Mammary epithelial cell (primary cell): ENCODE measurements at regions of chr19 and their contacts with region 1.

Region 1: DNA sequence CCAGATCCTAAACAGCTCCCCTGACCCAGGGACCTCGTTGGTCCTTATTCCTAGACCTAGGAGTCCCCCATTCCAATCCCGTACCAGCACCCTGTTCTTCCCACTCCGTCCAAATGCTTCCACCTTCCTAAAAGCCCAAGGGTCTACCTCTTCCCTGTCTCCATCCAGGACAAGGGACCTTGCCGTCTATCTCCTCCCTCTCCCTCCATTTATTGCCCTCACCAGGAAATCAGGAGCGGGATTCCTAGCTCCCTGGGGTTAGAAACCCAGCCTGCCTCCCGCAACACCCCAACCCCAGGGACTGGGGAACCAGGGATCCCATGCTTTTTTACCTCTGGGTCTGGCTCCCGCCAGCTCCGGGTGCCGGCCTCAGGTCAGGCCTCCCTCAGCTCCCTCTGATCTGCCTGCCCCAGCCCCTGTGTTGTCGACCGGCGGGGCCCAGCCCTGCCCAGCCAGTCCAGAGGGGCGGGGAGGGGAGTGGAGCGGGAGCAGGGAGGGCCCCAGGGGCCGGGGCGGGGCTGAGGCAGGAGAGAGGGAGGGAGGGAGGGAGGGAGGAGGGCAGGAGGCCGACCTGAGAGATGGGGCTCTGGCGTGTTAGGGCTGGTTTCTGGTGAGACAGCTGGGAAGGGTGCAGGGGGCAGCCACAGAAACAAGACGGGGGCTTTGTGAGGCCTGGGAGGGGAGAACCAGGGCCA is at the start of gene B3GNT8:
- DNase-seq: peak; percentile 84
- H3K4me3 ChIP-seq: peak within 1 kb of the TSS; percentile 52 to 67 (median 53)
- H3K27ac ChIP-seq: peak within 1 kb of the TSS; percentile 51
- H3K4me1 ChIP-seq: peaks cover 26% of the 10 kb centered on the region
- H3K27me3 ChIP-seq: no peaks in the 10 kb centered on the region
- CTCF ChIP-seq: no peak
- total RNA-seq, gene B3GNT8: 5.2 to 5.8 TPM

Region 2: GRCh38 chr19:41273076-41273475 is 154.0 kb before region 1 on chr19:
- CTCF ChIA-PET with region 1: no interaction called
- dilution Hi-C with region 1: loop called (anchors 5 kb)
- in situ Hi-C with region 1: no loop called
- intact Hi-C with region 1: no loop called
- DNase-seq: no peak
- H3K4me3 ChIP-seq: no peak overlapping the region
- H3K27ac ChIP-seq: no peak overlapping the region
- H3K4me1 ChIP-seq: no peaks in the 10 kb centered on the region
- H3K27me3 ChIP-seq: no peaks in the 10 kb centered on the region
- CTCF ChIP-seq: no peak

Region 3: GRCh38 chr19:41310033-41310758 is 116.9 kb before region 1 on chr19 and contains the start of gene CCDC97:
- CTCF ChIA-PET with region 1: no interaction called
- dilution Hi-C with region 1: no loop called
- in situ Hi-C with region 1: no loop called
- intact Hi-C with region 1: loop called (anchors 1 kb)
- DNase-seq: peak; percentile 83
- H3K4me3 ChIP-seq: peak within 1 kb of the TSS; percentile 75 to 89 (median 88)
- H3K27ac ChIP-seq: peak within 1 kb of the TSS; percentile 80
- H3K4me1 ChIP-seq: peaks cover 15% of the 10 kb centered on the region
- H3K27me3 ChIP-seq: no peaks in the 10 kb centered on the region
- CTCF ChIP-seq: peak in 1 of 2 donors; percentile 3
- total RNA-seq, gene CCDC97: 10.8 to 24.8 TPM

Region 4: DNA sequence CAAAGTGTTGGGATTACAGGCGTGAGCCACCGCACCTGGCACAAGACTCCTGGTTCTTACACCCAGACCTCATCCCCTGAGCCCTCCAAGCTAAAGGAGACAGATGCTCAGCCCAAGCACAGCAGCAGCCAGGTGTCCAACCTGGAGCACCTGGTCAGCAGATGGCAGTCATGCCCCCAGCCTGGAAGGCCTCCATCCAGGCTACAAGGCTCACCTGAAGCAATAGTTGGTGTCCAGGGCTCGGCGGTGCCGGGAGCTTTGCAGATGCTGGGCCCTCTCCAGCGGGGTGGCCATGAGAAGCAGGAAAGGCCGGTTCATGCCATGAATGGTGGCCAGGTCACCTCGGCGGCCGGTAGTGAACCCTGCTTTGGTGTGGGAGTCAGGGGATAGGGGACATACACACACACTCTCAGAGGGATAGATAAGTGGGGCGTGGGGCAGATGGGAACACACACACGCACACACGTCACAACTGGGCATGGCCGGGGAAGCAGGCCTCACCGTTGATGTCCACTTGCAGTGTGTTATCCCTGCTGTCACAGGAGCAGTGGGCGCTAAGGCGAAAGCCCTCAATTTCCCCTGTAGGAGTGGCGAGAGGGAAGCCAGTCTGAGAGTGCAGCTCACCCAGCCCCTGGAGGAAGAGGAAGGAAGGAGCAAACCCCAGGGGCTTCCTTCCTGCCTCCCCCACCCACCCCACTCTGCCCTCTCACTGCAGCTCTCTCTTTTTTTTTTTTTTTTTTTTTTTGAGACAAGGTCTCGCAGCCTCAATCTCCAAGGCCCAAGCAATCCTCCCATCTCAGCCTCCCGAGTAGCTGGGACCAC is 85.2 kb before region 1 on chr19:
- CTCF ChIA-PET with region 1: no interaction called
- dilution Hi-C with region 1: no loop called
- in situ Hi-C with region 1: no loop called
- intact Hi-C with region 1: loop called (anchors 1 kb)
- DNase-seq: no peak
- H3K4me3 ChIP-seq: no peak overlapping the region
- H3K27ac ChIP-seq: no peak overlapping the region
- H3K4me1 ChIP-seq: no peaks in the 10 kb centered on the region
- H3K27me3 ChIP-seq: no peaks in the 10 kb centered on the region
- CTCF ChIP-seq: peak in 1 of 2 donors; percentile 38

Region 5: DNA sequence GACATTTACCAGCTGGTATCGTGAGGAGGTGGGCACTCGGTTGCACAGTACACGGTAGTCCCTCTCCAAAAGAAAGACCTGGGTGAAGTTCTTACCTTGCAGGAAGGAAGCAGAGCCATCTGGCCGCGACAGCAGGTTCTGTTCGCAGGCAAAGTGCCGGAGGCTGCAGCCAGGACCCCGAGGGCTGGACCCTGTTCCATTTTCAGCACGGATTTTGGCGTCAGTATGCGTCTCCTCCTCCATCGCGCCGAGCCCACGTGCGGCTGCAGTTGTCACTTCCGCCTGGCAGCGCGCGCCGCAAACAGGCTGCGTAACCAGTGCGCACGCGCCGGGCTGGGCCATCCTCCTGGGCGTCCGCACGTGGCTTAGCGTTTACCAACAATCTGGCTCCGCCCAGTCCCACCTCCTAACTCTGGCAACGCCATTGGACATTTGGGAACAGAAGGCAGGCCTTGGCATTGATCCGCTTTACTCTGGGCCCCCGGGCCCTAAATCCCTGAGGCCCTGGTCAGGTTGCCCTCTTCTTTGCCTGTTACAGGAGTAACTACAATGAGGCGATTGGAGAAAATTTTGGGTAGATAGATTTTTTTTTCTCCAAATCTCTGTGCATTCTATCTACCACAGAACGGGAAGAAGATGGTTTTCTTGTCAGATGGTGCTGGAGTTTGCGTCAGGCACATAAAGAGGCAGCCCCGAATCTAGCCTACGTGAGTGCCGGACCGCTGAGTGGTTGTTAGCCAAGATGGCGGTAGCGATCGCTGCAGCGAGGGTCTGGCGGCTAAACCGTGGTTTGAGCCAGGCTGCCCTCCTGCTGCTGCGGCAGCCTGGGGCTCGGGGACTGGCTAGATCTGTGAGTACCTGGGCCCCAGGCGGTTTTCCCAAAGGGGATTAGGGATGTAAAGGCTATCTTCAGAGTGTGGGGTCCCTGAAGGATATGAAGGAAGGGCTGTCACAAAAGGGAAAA is 29.7 kb before region 1 on chr19 and contains the starts of genes BCKDHA and EXOSC5:
- CTCF ChIA-PET with region 1: no interaction called
- dilution Hi-C with region 1: loop called (anchors 5 kb)
- in situ Hi-C with region 1: no loop called
- intact Hi-C with region 1: loop called (anchors 1 kb)
- DNase-seq: peak; percentile 99
- H3K4me3 ChIP-seq: peak within 1 kb of the TSS; percentile 90 to 97 (median 94)
- H3K27ac ChIP-seq: peak within 1 kb of the TSS; percentile 97
- H3K4me1 ChIP-seq: peaks cover 7% of the 10 kb centered on the region
- H3K27me3 ChIP-seq: no peaks in the 10 kb centered on the region
- CTCF ChIP-seq: no peak
- total RNA-seq, gene BCKDHA: 13.5 to 36.5 TPM
- total RNA-seq, gene EXOSC5: 16.5 to 17.3 TPM

Region 6: DNA sequence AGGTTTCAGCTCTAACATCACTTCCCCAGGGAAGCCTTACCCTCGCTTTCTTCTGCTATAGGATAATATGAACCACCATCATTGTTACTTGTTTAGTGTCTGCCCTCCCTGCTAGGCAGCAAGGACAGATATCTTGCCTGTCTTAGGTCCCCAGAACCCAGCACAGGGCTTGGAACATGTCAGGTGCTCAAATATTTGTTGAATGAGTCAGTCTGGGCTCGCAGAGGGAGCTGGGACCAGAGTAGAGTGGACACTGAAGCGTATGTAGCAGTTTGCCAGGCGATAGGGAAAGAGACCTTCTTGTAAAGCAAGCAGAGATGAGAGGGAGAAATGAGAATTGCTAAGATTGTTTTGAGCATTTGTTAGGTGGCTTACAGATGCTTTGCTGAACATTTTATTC is 17.8 kb before region 1 on chr19:
- CTCF ChIA-PET with region 1: no interaction called
- dilution Hi-C with region 1: no loop called
- in situ Hi-C with region 1: no loop called
- intact Hi-C with region 1: loop called (anchors 2 kb)
- DNase-seq: peak; percentile 58
- H3K4me3 ChIP-seq: no peak overlapping the region
- H3K27ac ChIP-seq: no peak overlapping the region
- H3K4me1 ChIP-seq: peaks cover 22% of the 10 kb centered on the region
- H3K27me3 ChIP-seq: no peaks in the 10 kb centered on the region
- CTCF ChIP-seq: no peak